ENCODE measurements at regions of chr20 and their contacts with region 1.

Region 1: GRCh38 chr20:34001378-34001777 is 7.7 kb downstream of the RALY start:
- DNase-seq: no peak

Region 2: DNA sequence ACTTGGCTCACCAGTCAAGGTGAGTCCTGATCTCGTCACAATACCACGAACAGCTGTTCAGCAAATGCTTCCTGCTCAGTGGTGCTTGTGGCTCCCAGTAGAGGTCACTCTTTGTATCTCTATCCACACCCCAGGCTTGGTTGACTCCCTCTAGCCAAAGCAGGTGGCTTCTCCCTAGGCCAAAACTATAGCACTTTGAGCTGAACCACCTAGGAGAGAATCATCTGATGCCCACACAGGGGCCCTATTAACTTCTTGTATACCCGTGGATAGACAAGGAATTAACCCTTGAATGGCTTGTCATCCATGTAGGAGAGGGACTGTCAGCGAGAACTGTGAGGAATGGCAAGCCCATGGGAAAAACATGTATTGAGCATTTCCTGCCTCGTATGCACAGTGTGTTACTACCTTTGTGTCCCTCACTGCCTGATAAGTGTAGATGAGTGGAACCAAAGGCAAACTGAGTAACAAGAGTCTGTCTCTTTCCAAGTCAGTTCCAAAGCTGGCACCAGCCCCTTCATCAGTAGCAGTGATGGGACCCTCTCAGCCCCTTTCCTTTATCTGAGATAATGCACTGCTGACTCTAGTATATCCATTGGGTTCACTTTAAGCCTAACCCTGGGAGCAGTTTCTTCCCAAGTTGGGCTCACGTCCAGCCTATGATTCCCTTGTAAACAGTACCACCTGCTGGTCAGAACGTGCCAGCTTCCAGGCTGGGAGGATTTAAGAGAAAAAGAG is 68.1 kb after region 1 on chr20:
- in situ Hi-C with region 1: loop called (anchors 5 kb)
- DNase-seq: peak; percentile 89